ENCODE measurements at regions of chr2 and their contacts with region 1.

Region 1: DNA sequence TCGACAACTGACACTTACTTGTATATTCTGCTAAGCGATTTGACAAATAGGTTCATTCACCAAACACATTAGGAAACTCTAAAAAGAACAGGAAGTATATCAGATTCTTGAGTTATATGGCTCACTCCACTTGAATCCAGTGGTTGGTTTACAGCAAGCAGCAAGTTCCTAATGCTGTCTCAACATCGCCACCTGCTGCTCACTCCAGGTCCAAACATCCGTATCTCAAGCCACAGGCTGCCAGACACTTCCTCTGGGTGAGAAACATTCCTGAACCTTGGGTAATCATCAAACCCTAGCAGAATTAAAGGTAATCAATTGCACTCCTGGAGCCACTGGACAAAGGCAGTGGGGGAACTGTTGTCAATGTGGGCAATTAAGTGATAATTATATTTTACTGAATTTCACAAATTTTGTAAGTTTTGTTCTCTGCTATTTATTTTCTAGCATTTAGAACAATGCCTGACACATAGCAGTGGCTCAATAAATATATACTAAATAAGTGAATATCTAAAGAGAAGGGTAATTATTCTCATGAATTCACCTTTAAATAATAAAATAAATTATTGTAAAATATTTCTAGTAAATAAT is 107.1 kb upstream of the TTN start:
- DNase-seq: peak; percentile 54
- H3K4me3 ChIP-seq: no peak overlapping the region
- CTCF ChIP-seq: peak; percentile 85

Region 2: DNA sequence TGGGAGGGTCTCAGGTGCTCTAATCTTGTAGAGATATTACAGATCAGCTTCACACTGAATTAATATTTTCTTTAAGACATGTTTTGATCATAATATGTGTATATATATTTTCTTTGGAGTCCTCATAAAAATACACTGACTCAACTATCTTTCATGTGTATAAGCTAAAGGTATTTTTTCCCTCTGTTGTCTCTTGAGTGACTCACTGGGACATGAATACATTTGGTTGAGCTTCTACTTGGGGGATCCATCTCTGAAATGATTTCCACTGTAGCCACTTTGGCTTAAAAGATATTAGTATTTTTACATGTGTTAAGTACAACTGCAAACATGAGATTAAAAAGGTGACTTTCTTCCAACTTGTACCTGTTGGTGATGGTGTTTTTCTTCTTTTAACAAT is 247.9 kb before region 1 on chr2:
- CTCF ChIA-PET with region 1: no interaction called
- POLR2A ChIA-PET with region 1: no interaction called
- DNase-seq: no peak
- H3K4me3 ChIP-seq: no peak overlapping the region
- CTCF ChIP-seq: no peak

Region 3: GRCh38 chr2:178796079-178796677 is 118.2 kb before region 1 on chr2:
- CTCF ChIA-PET with region 1: interaction called, 20 read pairs
- POLR2A ChIA-PET with region 1: no interaction called
- DNase-seq: peak; percentile 5
- H3K4me3 ChIP-seq: no peak overlapping the region
- CTCF ChIP-seq: peak; percentile 27

Measured in AG04449 (cell line).